Activated B cell treated with CpG ODN at 0.5 μM for 24 hours (primary cell): ENCODE measurements at regions of chr20 and their contacts with region 1.

Region 1: DNA sequence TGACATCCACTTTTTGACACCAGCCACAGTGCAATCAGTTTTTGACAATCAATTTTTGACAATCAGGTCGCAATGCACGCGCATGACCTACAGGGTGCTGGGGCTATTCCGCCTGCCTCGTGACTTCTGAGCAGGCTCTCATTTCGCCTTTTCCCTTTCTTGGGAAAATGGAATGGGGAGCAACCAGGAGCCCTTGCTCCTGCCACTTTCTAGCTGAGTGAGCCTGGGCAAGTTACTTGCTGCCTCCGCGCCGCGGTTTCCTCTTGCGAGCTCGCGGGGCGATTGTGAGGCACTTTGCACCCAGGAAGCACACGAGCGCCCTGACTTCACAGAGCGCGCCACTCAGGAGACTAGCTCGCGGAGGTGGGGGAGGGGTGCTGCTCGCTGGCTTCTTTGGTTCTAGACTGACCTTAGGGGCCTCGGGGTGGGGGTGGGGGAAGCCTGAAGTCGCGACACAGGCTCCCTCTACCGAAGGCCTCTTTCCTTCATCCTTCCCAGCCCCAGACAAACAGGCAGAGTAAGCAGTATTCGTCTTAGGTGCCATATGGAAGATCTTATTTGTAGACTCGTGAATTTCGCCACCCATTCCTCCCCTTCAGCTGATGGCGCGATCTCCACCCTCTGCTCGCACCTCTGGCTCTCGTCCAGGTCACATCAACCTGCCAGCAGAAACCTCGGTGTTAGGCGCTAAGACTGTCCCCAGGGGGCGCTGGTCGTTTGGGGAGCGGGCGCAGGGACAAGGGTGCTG is 4.6 kb downstream of the TP53TG5 start:
- DNase-seq: peak; percentile 76
- ATAC-seq: peak; percentile 94
- H3K4me3 Mint-ChIP-seq: peak overlapping the region; percentile 86
- H3K27ac Mint-ChIP-seq: peak overlapping the region; percentile 76
- H3K4me1 Mint-ChIP-seq: peaks cover 56% of the 10 kb centered on the region
- H3K27me3 Mint-ChIP-seq: no peaks in the 10 kb centered on the region
- CTCF ChIP-seq: no peak

Region 2: GRCh38 chr20:45387274-45387673 is 13.7 kb after region 1 on chr20:
- CTCF ChIA-PET with region 1: interaction called, 11 read pairs
- POLR2A ChIA-PET with region 1: interaction called, 5 read pairs
- intact Hi-C with region 1: no loop called
- DNase-seq: no peak
- ATAC-seq: no peak
- H3K4me3 Mint-ChIP-seq: no peak overlapping the region
- H3K27ac Mint-ChIP-seq: no peak overlapping the region
- H3K4me1 Mint-ChIP-seq: peaks cover 5% of the 10 kb centered on the region
- H3K27me3 Mint-ChIP-seq: no peaks in the 10 kb centered on the region
- CTCF ChIP-seq: no peak

Region 3: DNA sequence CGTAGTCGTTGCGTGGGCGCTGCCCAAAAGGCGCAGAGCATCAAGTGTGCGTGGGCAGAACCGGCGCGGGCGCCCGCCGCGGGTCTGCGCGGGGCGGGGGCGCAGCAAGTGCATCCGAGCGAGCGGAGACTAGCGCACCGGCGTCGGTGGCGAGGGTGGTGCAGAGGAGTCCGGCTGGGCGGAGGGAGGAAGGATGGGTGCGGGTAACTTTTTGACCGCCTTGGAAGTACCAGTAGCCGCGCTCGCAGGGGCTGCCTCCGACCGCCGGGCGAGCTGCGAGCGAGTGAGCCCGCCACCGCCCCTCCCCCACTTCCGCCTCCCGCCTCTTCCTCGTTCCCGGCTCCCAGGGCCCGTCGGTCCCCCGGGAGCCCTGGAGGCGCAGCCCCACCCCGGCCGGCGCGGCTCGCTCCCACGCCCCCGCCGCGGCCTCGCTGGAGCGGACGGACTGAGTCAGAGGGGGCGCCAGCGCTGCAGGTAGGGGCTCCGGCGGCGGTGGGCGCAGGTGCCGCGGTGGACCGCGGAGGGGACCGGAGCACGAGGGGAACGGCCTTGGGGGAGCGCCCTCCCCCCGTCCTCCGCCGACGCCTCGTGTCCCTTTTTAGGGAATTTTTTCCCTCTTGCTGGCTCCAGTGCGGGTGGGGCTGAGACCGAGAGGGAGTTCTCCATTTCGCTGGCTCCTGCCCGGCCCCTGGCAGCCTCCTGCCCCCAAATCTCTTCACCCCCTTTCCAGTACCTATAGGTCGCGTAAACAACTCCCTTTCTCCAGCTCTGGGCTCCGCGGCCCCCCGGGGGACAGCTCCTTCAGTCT is 32.9 kb after region 1 on chr20:
- CTCF ChIA-PET with region 1: interaction called, 11 read pairs
- POLR2A ChIA-PET with region 1: interaction called, 13 read pairs
- intact Hi-C with region 1: loop called (anchors 1 kb)
- DNase-seq: peak; percentile 48
- ATAC-seq: peak; percentile 60
- H3K4me3 Mint-ChIP-seq: peak overlapping the region; percentile 75
- H3K27ac Mint-ChIP-seq: no peak overlapping the region
- H3K4me1 Mint-ChIP-seq: peaks cover 28% of the 10 kb centered on the region
- H3K27me3 Mint-ChIP-seq: no peaks in the 10 kb centered on the region
- CTCF ChIP-seq: no peak

Region 4: DNA sequence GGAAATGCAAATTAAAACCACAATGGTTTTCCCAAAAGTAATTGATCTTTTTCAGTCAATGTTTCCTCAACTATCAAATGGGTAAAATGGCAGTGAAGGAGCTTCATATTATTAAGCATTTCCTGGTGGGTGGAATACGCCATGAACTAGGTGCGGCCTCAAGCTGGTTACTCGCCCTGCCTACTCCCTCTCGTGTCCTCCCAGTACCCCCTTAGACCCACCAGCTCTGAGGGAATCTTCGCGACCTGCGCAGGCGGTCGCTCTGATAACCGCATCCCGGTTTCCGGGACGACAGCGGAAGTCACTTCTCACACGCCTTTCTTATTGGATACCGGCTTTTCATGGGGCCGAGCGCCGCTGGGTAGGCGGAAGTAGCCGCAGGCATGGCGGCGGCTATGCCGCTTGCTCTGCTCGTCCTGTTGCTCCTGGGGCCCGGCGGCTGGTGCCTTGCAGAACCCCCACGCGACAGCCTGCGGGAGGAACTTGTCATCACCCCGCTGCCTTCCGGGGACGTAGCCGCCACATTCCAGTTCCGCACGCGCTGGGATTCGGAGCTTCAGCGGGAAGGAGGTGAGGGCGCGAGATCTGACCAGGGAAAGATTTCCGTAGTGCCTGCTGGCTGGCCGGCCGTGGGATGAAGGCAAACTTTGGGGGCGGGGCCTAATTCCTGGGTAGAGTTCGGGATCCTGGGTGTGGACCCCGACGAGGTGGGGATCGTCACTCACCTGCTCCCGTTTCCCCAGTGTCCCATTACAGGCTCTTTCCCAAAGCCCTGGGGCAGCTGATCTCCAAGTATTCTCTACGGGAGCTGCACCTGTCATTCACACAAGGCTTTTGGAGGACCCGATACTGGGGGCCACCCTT is 42.5 kb after region 1 on chr20 and contains the start of gene PIGT:
- CTCF ChIA-PET with region 1: interaction called, 16 read pairs
- POLR2A ChIA-PET with region 1: interaction called, 29 read pairs
- intact Hi-C with region 1: loop called (anchors 1 kb)
- DNase-seq: peak; percentile 75
- ATAC-seq: peak; percentile 86
- H3K4me3 Mint-ChIP-seq: peak within 1 kb of the TSS; percentile 96
- H3K27ac Mint-ChIP-seq: peak within 1 kb of the TSS; percentile 98
- H3K4me1 Mint-ChIP-seq: peaks cover 58% of the 10 kb centered on the region
- H3K27me3 Mint-ChIP-seq: no peaks in the 10 kb centered on the region
- CTCF ChIP-seq: no peak
- total RNA-seq, gene PIGT: 65.8 and 74.5 TPM in 2 replicates

Region 5: DNA sequence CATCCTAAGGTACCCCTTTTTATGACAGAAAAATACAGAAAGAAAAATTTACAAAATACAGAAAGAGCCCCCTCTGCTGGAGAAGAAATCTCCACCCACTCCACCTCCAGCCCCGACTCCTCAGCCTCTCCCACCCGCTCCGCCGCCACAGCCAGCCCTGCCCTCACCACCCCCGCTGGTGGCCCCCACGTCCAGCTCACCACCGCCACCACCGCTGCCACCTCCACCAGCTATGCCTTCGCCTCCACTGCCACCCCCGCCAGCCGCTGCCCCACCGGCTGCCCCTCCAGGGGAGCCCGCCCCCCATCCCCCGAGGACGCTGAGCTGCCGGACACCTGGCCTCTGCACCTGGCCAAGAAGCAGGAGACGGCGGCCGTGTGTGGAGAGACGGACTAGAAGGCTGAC is 113.7 kb after region 1 on chr20:
- CTCF ChIA-PET with region 1: interaction called, 10 read pairs
- POLR2A ChIA-PET with region 1: no interaction called
- intact Hi-C with region 1: no loop called
- DNase-seq: no peak
- ATAC-seq: no peak
- H3K4me3 Mint-ChIP-seq: no peak overlapping the region
- H3K27ac Mint-ChIP-seq: no peak overlapping the region
- H3K4me1 Mint-ChIP-seq: no peaks in the 10 kb centered on the region
- H3K27me3 Mint-ChIP-seq: peaks cover 26% of the 10 kb centered on the region
- CTCF ChIP-seq: no peak